CD4-positive, alpha-beta T cell (primary cell): ENCODE measurements at regions of chr20 and their contacts with region 1.

Region 1: GRCh38 chr20:45193331-45193730 is 13.5 kb upstream of the SEMG1 start:
- DNase-seq: no peak
- ATAC-seq: no peak
- H3K4me3 ChIP-seq: no peak overlapping the region
- H3K4me3 Mint-ChIP-seq: no peak overlapping the region
- H3K27ac ChIP-seq: no peak overlapping the region
- H3K27ac Mint-ChIP-seq: no peak overlapping the region
- H3K4me1 ChIP-seq: no peaks in the 10 kb centered on the region
- H3K4me1 Mint-ChIP-seq: no peaks in the 10 kb centered on the region
- H3K27me3 ChIP-seq: peaks cover 2 to 7% of the 10 kb centered on the region in 2 experiments
- H3K27me3 Mint-ChIP-seq: peaks cover 21% of the 10 kb centered on the region
- CTCF ChIP-seq: no peak

Region 2: GRCh38 chr20:45229264-45230056 is 36.1 kb after region 1 on chr20:
- CTCF ChIA-PET with region 1: no interaction called
- POLR2A ChIA-PET with region 1: no interaction called
- intact Hi-C with region 1: no loop called
- DNase-seq: peak in 8 of 14 experiments; percentile 2 to 33 (median 7)
- ATAC-seq: no peak
- H3K4me3 ChIP-seq: no peak overlapping the region
- H3K4me3 Mint-ChIP-seq: no peak overlapping the region
- H3K27ac ChIP-seq: no peak overlapping the region
- H3K27ac Mint-ChIP-seq: no peak overlapping the region
- H3K4me1 ChIP-seq: no peaks in the 10 kb centered on the region
- H3K4me1 Mint-ChIP-seq: no peaks in the 10 kb centered on the region
- H3K27me3 ChIP-seq: peaks cover 5 to 38% of the 10 kb centered on the region in 2 experiments
- H3K27me3 Mint-ChIP-seq: peaks cover 62% of the 10 kb centered on the region
- CTCF ChIP-seq: no peak

Region 3: DNA sequence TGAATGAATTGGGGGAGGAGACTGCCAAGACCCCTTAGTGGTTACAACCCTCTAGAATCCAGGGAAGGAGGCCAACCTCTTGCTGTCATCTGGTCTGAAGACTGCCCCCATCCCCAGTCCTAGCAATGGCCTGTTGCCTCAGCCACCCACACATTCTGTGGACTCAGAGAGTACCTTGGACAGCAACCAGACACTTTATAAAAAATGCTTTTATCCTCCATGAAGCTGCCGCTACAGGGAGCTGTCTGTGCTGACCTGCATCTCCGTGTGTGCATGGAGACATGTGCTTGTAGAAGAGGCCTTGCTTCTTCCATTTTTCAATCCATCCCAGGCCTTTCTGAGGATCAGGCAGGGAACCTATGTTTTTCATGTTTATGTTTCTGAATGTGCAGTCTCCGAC is 1099.8 kb after region 1 on chr20:
- CTCF ChIA-PET with region 1: no interaction called
- POLR2A ChIA-PET with region 1: no interaction called
- intact Hi-C with region 1: loop called in 1 of 2 experiments (anchors 5 kb)
- DNase-seq: no peak
- ATAC-seq: no peak
- H3K4me3 ChIP-seq: no peak overlapping the region
- H3K4me3 Mint-ChIP-seq: no peak overlapping the region
- H3K27ac ChIP-seq: no peak overlapping the region
- H3K27ac Mint-ChIP-seq: no peak overlapping the region
- H3K4me1 ChIP-seq: no peaks in the 10 kb centered on the region
- H3K4me1 Mint-ChIP-seq: no peaks in the 10 kb centered on the region
- H3K27me3 ChIP-seq: peaks cover 31 to 37% of the 10 kb centered on the region in 2 experiments
- H3K27me3 Mint-ChIP-seq: peaks cover 56% of the 10 kb centered on the region
- CTCF ChIP-seq: no peak